Upper lobe of right lung (tissue), 1 donor: ENCODE measurements at regions of chr1 and their contacts with region 1.

Region 1: DNA sequence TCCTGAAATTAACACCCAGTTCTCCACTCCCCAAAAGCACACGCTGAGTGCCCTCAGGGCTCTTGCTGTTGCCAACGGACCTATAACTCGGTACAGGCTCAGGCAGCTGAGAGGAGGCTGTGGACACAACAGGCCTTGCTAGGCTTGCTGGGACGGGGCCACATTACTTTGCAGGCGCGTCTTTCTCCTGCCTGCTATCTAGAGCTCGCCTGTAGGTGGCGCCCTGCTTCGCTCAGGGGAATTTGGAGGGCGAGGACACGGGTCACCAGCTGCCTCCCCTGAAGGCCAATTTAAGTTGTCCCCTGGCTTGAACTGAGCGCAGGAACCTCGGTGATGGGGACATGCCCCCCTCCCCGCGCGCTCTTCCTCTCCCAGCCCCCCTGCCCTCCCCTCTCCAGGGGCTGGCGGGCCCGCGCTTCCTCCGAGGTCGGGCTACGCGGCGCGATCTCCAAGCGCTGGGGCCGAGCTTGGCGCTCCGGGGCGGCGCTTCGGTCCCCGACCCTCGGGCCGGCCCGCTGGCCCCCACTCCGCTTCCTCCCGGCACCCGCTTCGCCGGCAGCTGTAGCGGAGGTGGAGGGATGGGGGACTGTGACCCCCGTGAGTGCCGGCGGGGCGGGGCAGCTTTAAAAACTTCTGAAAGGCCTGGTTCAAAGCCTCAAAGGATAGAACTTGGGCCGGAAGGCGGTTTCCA is 32.4 kb upstream of the NFIA start:
- DNase-seq: peak; percentile 95
- ATAC-seq: peak; percentile 94
- H3K4me3 ChIP-seq: peak overlapping the region; percentile 77
- H3K27ac ChIP-seq: peak overlapping the region; percentile 93
- H3K4me1 ChIP-seq: peaks cover 27% of the 10 kb centered on the region
- H3K27me3 ChIP-seq: no peaks in the 10 kb centered on the region
- CTCF ChIP-seq: peak; percentile 99

Region 2: DNA sequence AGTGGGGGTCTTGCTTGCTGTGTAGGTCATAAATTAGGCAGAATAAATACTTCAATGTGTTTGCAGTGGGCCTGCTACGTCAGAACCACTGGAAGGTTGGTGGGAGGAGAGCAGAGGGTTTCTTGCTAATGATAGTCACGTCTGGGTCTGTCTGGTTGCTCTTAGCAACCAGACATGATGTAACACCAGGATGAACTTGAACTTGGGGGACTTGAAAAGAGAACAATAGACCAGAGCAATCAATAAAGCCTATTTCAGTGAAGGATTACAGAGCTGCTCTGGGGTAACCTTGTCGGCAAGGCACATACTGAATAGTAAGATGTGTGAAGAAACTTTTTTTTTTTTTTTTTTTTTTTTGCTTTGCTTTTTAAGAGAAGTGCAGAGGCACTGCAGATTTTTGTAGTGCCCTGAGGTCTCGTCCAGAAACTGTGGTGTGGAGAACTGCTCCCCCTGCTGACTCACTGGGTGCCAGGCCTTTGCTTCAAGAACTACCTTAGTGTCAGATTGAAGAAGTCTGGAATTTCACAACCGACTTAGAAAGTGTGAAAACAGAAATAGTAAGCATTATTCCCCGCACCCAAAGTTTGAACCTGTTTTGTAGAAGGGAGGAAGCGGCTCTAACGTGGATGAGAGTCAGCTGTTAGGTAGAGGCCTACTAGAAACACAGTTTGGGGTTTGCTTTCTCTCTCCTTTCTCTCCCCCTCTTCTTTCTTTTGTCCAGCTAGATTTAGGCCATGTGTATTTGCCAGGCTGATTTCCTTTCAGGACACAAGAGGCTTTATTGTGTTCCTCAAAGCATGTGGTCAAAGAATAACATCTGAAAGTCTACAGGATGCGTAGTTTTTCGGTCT is 403.3 kb after region 1 on chr1:
- intact Hi-C with region 1: loop called (anchors 10 kb)
- DNase-seq: peak; percentile 86
- ATAC-seq: peak; percentile 97
- H3K4me3 ChIP-seq: no peak overlapping the region
- H3K27ac ChIP-seq: peak overlapping the region; percentile 75
- H3K4me1 ChIP-seq: peaks cover 40% of the 10 kb centered on the region
- H3K27me3 ChIP-seq: no peaks in the 10 kb centered on the region
- CTCF ChIP-seq: peak; percentile 81